Aorta (tissue), 5 donors: ENCODE measurements at regions of chr4 and their contacts with region 1.

Region 1: GRCh38 chr4:38034986-38035882 is 75.0 kb downstream of the PTTG2 start:
- DNase-seq: no peak
- ATAC-seq: peak; percentile 85
- H3K4me3 ChIP-seq: no peak overlapping the region
- H3K27ac ChIP-seq: no peak overlapping the region
- H3K4me1 ChIP-seq: no peaks in the 10 kb centered on the region
- H3K27me3 ChIP-seq: no peaks in the 10 kb centered on the region

Region 2: GRCh38 chr4:37603070-37603468 is 432.2 kb before region 1 on chr4:
- intact Hi-C with region 1: loop called (anchors 10 kb)
- DNase-seq: peak; percentile 86 to 93
- ATAC-seq: peak; percentile 93
- H3K4me3 ChIP-seq: no peak overlapping the region
- H3K27ac ChIP-seq: no peak overlapping the region
- H3K4me1 ChIP-seq: no peaks in the 10 kb centered on the region
- H3K27me3 ChIP-seq: no peaks in the 10 kb centered on the region

Region 3: GRCh38 chr4:37686373-37687193 is 348.7 kb before region 1 on chr4 and contains the start of gene RELL1:
- intact Hi-C with region 1: loop called in 1 of 2 experiments (anchors 10 kb)
- DNase-seq: peak; percentile 100
- ATAC-seq: peak; percentile 99
- H3K4me3 ChIP-seq: peak within 1 kb of the TSS; percentile 44 to 71
- H3K27ac ChIP-seq: peak within 1 kb of the TSS in 1 of 2 donors; percentile 78
- H3K4me1 ChIP-seq: peaks cover 0 to 3% of the 10 kb centered on the region in 2 donors
- H3K27me3 ChIP-seq: no peaks in the 10 kb centered on the region
- total RNA-seq, gene RELL1: 33.2 to 42.5 TPM

Region 4: DNA sequence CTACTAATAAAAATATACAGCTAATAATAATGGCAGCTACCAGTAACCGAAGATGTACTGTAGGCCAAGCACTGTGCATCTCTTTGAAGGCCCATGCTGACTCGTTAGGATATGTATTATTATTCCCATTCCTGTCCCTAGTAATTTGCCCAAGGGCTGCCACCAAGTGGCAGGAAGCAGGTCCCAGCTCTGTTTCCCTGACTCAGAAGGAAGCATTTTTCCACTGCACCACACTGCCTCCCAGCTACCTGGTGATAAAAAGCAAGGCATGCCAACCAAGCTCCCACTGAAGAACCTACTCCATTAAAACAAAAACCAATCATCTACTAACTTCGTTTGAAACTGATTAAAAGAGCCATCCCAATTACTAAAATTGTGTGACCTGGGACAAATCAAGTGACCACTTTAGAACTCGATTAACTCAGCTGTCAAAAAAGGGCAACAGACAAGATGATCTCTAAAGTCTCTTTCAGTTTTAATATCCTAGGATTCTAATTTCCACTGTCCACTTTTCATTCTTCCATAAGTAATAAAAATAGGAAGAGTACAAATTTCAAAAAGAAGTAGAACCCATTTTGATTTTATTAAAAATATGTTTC is 233.1 kb before region 1 on chr4:
- intact Hi-C with region 1: loop called (anchors 2 to 5 kb)
- DNase-seq: no peak
- ATAC-seq: peak; percentile 54
- H3K4me3 ChIP-seq: no peak overlapping the region
- H3K27ac ChIP-seq: no peak overlapping the region
- H3K4me1 ChIP-seq: no peaks in the 10 kb centered on the region
- H3K27me3 ChIP-seq: no peaks in the 10 kb centered on the region

Region 5: GRCh38 chr4:37826295-37827029 is 208.8 kb before region 1 on chr4 and contains the start of gene PGM2:
- intact Hi-C with region 1: loop called in 1 of 2 experiments (anchors 5 kb)
- DNase-seq: peak; percentile 93 to 96
- ATAC-seq: peak; percentile 98
- H3K4me3 ChIP-seq: peak within 1 kb of the TSS; percentile 33 to 79
- H3K27ac ChIP-seq: peak within 1 kb of the TSS in 1 of 2 donors; percentile 45
- H3K4me1 ChIP-seq: peaks cover 0 to 2% of the 10 kb centered on the region in 2 donors
- H3K27me3 ChIP-seq: no peaks in the 10 kb centered on the region
- total RNA-seq, gene PGM2: 23.7 to 24.6 TPM

Region 6: GRCh38 chr4:37891260-37892159 is 143.7 kb before region 1 on chr4:
- intact Hi-C with region 1: loop called (anchors 5 to 10 kb)
- DNase-seq: peak in 1 of 2 donors; percentile 55
- ATAC-seq: peak; percentile 12
- H3K4me3 ChIP-seq: peak overlapping the region; percentile 77 to 93
- H3K27ac ChIP-seq: peak overlapping the region; percentile 77 to 91
- H3K4me1 ChIP-seq: peaks cover 5% of the 10 kb centered on the region in 2 donors
- H3K27me3 ChIP-seq: no peaks in the 10 kb centered on the region

Region 7: DNA sequence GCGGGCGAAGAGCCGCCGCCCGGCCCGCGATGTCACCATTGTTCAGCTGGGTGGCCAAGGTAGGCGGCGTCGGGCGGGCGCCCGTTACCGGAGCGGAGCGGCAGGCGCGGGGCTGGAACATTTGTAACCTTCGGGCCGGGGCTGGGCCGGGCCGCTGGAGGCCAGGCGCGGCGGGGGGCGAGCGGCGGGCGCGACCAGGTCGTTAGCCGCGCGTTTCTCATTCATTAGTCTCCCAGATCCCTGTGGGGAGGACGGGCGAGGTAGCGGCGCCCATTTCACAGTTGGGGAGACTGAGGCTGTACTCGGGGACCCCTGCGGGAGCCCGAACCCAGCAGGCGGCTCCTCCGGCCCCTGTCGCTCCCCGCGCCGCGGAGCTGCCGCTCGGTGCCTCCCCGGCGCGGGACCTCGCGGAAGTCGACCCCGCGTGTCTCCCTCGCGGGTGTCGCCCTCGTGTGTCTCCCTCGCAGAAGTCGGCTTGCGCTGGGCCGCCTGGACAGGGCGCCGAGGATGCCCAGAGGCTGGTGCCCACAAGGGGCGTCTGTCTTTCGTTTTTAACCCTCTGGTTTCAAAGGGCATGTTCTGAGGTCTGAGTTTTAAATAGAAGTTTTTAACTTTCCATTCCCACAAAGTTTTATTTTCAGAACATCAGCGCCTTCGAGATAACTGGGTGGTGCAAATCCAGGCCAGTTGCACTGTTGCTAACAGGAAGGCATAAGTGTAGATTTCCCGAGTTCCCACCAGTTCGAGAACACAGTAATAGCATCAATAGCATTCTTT is 57.6 kb before region 1 on chr4:
- intact Hi-C with region 1: loop called (anchors 2 to 5 kb)
- DNase-seq: peak; percentile 89 to 94
- ATAC-seq: peak; percentile 92
- H3K4me3 ChIP-seq: peak overlapping the region; percentile 61 to 91
- H3K27ac ChIP-seq: peak overlapping the region; percentile 96 to 97
- H3K4me1 ChIP-seq: peaks cover 6 to 7% of the 10 kb centered on the region in 2 donors
- H3K27me3 ChIP-seq: no peaks in the 10 kb centered on the region

Region 8: GRCh38 chr4:38710053-38710452 is 674.8 kb after region 1 on chr4:
- intact Hi-C with region 1: no loop called
- DNase-seq: no peak
- ATAC-seq: no peak
- H3K4me3 ChIP-seq: no peak overlapping the region
- H3K27ac ChIP-seq: no peak overlapping the region
- H3K4me1 ChIP-seq: no peaks in the 10 kb centered on the region
- H3K27me3 ChIP-seq: no peaks in the 10 kb centered on the region